H1 (cell line): ENCODE measurements at regions of chr9 and their contacts with region 1.

Region 1: DNA sequence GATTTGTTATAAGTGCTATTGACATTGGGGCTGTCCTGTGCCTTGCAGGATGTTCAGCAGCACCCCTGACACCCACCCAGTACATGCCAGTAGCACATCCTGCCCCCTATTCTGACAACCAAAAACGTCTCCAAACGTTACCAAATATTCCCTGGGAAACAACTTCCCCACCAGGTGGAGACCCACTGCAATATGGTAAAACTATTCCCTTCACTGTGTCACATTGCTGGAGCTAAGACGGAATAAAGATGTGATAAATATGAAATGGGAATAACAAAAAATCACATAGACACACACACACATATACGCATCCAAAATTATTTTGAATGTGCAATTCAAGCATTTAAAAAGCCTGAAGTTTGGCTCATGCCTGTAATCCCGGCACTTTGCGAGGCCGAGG is 874.3 kb upstream of the DMAC1 start:
- DNase-seq: no peak
- H3K4me3 ChIP-seq: no peak overlapping the region
- H3K27ac ChIP-seq: no peak overlapping the region
- H3K4me1 ChIP-seq: peaks cover 0 to 8% (median 4%) of the 10 kb centered on the region in 4 experiments; a peak in 5 of 7 replicates
- H3K27me3 ChIP-seq: no peaks in the 10 kb centered on the region
- CTCF ChIP-seq: peak in 2 of 3 experiments; percentile 20 to 21; a peak in 2 of 4 replicates
- EP300 ChIP-seq: no peak
- POLR2A ChIP-seq: no peak
- RAD21 ChIP-seq: peak; percentile 36 to 44

Region 2: DNA sequence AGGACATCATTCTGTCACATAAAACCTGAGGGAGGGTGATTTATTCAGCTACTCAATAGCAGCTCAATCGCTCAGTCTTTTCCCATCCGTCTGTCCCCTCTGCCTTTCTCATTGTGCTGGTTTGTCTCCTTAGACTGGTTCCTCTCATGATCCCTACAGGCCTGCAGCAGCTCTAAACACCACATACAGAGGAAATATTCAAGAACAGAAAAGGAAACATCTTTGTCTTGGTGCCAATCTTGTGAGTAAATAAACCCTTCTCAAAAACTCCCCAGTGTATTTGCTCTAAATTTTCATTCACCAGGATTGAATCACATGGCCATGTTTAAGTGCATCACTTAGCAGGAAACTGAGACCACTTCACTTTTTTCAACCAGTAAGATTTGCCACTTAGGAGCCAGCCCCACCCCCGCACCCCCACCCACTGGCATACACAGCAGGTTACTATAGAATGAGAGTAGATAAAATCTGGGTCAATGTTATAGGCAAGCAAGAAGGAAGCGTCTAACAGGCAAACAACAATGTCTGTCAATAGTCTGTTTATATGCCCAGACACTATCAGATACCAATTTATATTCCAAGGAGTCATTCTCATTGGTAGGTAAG is 21.3 kb after region 1 on chr9:
- CTCF ChIA-PET with region 1: interaction called, 17 read pairs
- POLR2A ChIA-PET with region 1: no interaction called
- DNase-seq: no peak
- H3K4me3 ChIP-seq: no peak overlapping the region; a peak in 1 of 8 replicates
- H3K27ac ChIP-seq: no peak overlapping the region
- H3K4me1 ChIP-seq: peaks cover 0 to 13% (median 9%) of the 10 kb centered on the region in 4 experiments; a peak in 5 of 7 replicates
- H3K27me3 ChIP-seq: no peaks in the 10 kb centered on the region
- CTCF ChIP-seq: no peak
- EP300 ChIP-seq: no peak
- POLR2A ChIP-seq: no peak
- RAD21 ChIP-seq: no peak

Region 3: DNA sequence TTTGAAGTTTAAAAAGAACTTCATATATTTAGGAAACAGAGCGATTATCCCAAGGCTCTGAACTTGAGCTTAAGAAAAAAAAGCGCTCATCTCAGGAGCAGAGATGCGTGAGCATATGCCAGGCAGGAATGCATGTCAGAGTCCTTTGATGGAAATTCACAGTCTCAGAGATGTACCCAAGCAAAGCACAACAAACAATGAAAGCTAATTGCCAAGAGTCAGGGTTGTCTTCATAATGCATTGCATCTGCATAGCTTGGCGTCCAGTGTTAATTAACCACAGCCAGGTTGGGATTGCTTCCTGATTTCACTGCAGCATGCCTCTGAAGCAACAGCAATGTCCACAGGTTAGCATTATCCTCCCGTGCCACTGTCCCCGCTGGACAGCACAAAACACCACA is 32.7 kb after region 1 on chr9:
- CTCF ChIA-PET with region 1: no interaction called
- POLR2A ChIA-PET with region 1: no interaction called
- DNase-seq: no peak
- H3K4me3 ChIP-seq: no peak overlapping the region
- H3K27ac ChIP-seq: no peak overlapping the region
- H3K4me1 ChIP-seq: peaks cover 0 to 4% (median 1%) of the 10 kb centered on the region in 4 experiments; a peak in 2 of 7 replicates
- H3K27me3 ChIP-seq: no peaks in the 10 kb centered on the region
- CTCF ChIP-seq: no peak
- EP300 ChIP-seq: no peak
- POLR2A ChIP-seq: no peak
- RAD21 ChIP-seq: no peak

Region 4: DNA sequence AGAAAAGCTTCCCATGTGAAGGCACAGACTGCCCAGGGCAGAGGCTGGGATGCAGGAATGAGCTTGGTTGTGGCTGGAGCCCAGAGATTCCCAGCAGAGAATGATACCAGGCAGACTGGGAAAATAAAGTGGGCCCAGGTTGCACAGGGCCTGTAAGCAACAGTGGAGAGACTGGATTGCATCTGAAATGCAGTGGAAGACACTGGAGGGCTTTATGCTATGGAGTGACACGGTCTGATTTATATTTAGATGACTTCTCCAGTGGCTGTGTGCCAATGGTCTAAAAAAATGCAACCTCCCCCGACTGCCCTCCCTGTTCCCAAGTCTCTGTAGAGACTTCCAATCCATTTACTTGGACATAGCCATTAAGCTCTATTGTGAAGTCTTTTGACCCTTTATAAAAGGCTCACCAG is 76.8 kb after region 1 on chr9:
- CTCF ChIA-PET with region 1: interaction called, 10 read pairs
- POLR2A ChIA-PET with region 1: no interaction called
- DNase-seq: no peak
- H3K4me3 ChIP-seq: no peak overlapping the region
- H3K27ac ChIP-seq: no peak overlapping the region
- H3K4me1 ChIP-seq: peaks cover 8 to 12% (median 10%) of the 10 kb centered on the region in 4 experiments; a peak in 5 of 7 replicates
- H3K27me3 ChIP-seq: no peaks in the 10 kb centered on the region
- CTCF ChIP-seq: no peak
- EP300 ChIP-seq: no peak
- POLR2A ChIP-seq: no peak
- RAD21 ChIP-seq: no peak